T47D (cell line): ENCODE measurements at regions of chr11 and their contacts with region 1.

Region 1: DNA sequence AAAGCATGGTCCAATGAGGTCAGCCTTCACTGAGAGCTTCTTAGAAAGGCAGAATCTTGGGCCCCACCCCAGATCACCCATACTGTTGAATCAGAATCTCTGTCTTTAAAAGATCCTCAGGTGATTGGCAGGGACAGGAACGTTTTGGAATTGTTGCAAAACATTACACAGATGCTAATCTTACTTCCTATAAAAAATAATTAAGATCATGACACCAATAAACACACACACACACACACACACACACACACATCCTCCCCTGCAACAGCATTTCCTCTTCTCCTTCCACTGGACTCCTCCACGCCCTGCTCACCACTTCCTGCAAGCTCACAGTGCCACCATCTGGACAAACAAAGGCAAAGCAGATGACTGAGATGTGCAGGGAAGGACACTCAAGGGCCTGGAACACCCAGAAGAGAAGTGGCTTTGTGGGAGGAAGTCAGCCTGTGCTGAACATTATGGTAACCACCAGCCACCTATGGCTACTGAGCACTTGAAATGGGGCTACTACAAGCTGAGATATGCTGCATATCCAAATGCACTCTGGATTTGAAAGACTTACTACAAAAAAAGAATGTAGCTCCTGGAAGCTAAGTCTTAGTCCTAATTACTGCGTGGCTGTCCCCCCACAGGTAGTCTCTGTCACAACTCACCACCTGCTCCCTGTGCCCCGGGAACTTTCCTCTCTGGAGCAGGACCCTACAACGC is 65.6 kb downstream of the BTG4 start:
- DNase-seq: peak; percentile 92 to 95

Region 2: DNA sequence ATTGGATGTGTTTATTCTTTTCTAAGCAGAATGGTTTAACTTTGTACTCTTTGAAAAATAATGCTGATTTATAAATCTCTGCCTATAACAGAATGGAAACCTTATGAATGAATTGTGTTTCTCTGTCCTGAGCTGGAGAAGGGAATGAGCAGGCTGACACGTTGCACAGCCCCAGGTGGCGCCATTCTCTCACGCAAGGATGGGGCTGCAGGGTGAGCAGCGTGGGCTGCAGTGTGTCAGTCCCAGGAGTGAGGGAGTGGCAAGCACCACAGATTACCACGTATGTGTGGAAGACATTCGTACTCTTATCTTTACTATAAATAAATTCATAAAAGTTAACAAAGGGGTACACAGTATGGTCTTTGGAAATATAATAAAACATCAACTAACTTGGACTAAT is 983.4 kb before region 1 on chr11:
- in situ Hi-C with region 1: loop called (anchors 25 kb)
- DNase-seq: peak in 1 of 2 experiments; percentile 68

Region 3: DNA sequence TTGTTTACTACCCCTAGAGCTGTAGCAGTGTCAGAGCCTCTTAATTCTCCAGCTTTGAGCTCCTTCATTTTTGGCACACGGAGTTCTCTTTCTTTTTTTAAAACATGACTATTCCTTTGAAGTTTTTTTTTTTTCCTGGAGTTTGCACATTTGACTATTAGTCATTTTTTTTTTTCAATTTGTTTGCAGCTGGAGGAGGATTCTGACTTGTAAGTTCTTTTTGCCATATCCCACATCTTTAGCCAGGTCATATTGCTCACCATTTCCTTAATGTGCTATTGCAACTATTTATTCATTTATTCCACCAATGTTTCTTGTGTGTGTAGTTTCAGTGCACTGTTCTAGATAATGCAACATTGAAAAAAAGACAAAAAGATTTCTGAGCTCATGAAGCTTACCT is 568.0 kb before region 1 on chr11:
- in situ Hi-C with region 1: no loop called
- DNase-seq: no peak

Region 4: GRCh38 chr11:111299101-111300026 is 147.2 kb before region 1 on chr11:
- in situ Hi-C with region 1: loop called (anchors 25 kb)
- DNase-seq: peak; percentile 74 to 77